ENCODE measurements at regions of chrX and their contacts with region 1.

Region 1: DNA sequence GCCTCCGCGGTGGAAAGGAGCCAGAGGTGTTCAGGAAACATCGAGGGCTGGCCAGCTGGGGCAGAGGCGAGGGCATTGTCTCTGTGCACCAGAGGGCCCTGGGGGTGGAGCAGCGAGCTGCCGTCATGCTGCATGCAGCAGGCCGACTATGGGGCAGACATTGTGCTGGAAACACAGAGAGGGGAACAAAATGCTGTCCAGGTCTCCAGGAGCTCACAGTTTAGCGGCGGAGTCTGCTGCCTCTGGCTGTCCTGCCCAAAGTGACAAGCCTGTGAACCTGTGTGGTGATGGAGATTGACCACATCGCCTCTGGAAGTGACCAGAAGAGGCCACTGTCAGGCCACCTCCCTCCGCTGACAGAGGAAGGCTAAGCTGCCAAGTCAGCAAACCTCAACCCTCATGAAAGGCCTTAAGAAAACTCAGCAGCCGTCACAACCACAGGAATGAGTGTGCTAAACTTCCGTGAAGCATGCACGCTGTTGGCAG is 20.1 kb upstream of the SASH3 start:
- DNase-seq: no peak
- H3K4me3 ChIP-seq: no peak overlapping the region
- H3K27ac ChIP-seq: peak overlapping the region; percentile 41
- H3K4me1 ChIP-seq: peaks cover 65% of the 10 kb centered on the region
- CTCF ChIP-seq: no peak

Region 2: GRCh38 chrX:129037381-129037780 is 722.2 kb before region 1 on chrX:
- CTCF ChIA-PET with region 1: no interaction called
- POLR2A ChIA-PET with region 1: no interaction called
- intact Hi-C with region 1: no loop called
- DNase-seq: no peak
- H3K4me3 ChIP-seq: no peak overlapping the region
- H3K27ac ChIP-seq: no peak overlapping the region
- H3K4me1 ChIP-seq: no peaks in the 10 kb centered on the region
- CTCF ChIP-seq: no peak

Region 3: GRCh38 chrX:129772796-129773431 is 13.3 kb after region 1 on chrX:
- CTCF ChIA-PET with region 1: interaction called, 3 read pairs
- POLR2A ChIA-PET with region 1: interaction called, 31 read pairs
- intact Hi-C with region 1: no loop called
- DNase-seq: peak; percentile 92
- H3K4me3 ChIP-seq: peak overlapping the region; percentile 21
- H3K27ac ChIP-seq: peak overlapping the region; percentile 99
- H3K4me1 ChIP-seq: peaks cover 97% of the 10 kb centered on the region
- CTCF ChIP-seq: peak; percentile 25; the same call in 1 of the 2 replicates

Region 4: GRCh38 chrX:129823115-129823514 is 63.5 kb after region 1 on chrX:
- CTCF ChIA-PET with region 1: no interaction called
- POLR2A ChIA-PET with region 1: no interaction called
- intact Hi-C with region 1: loop called (anchors 1 kb)
- DNase-seq: peak; percentile 71
- H3K4me3 ChIP-seq: no peak overlapping the region
- H3K27ac ChIP-seq: no peak overlapping the region
- H3K4me1 ChIP-seq: peaks cover 10% of the 10 kb centered on the region
- CTCF ChIP-seq: peak; percentile 85

Measured in OCI-LY7 (cell line).